ENCODE measurements at regions of chr10 and their contacts with region 1.

Region 1: GRCh38 chr10:8065651-8066050 is 11.2 kb downstream of the GATA3 start:
- DNase-seq: peak; percentile 74
- H3K4me3 ChIP-seq: no peak overlapping the region
- H3K27ac ChIP-seq: peak overlapping the region; percentile 14
- H3K4me1 ChIP-seq: peaks cover 65% of the 10 kb centered on the region
- H3K27me3 ChIP-seq: no peaks in the 10 kb centered on the region
- CTCF ChIP-seq: no peak

Region 2: DNA sequence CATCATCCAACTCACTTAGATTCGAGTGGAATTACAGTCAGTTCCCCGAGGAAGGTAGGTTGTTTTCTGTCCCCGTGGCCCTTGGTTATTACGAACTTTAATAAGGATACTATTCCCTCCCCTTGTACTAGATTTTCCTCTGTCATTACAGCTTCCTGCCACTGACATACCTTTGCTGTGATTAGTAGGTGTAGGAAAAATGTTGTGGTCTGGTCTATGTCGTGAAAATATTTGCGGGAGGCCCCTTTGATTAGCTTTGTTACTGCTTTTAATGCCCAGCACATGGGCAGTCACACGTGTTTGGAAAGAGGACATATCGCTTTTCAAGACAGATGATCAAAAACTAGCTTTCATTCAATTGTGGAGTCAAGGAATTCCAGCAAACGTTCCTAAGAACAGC is 81.0 kb after region 1 on chr10:
- CTCF ChIA-PET with region 1: no interaction called
- dilution Hi-C with region 1: loop called (anchors 5 kb)
- in situ Hi-C with region 1: no loop called
- intact Hi-C with region 1: no loop called
- DNase-seq: peak; percentile 69
- H3K4me3 ChIP-seq: no peak overlapping the region
- H3K27ac ChIP-seq: no peak overlapping the region
- H3K4me1 ChIP-seq: peaks cover 9% of the 10 kb centered on the region
- H3K27me3 ChIP-seq: no peaks in the 10 kb centered on the region
- CTCF ChIP-seq: no peak